GM23248 (cell line): ENCODE measurements at regions of chr16 and their contacts with region 1.

Region 1: DNA sequence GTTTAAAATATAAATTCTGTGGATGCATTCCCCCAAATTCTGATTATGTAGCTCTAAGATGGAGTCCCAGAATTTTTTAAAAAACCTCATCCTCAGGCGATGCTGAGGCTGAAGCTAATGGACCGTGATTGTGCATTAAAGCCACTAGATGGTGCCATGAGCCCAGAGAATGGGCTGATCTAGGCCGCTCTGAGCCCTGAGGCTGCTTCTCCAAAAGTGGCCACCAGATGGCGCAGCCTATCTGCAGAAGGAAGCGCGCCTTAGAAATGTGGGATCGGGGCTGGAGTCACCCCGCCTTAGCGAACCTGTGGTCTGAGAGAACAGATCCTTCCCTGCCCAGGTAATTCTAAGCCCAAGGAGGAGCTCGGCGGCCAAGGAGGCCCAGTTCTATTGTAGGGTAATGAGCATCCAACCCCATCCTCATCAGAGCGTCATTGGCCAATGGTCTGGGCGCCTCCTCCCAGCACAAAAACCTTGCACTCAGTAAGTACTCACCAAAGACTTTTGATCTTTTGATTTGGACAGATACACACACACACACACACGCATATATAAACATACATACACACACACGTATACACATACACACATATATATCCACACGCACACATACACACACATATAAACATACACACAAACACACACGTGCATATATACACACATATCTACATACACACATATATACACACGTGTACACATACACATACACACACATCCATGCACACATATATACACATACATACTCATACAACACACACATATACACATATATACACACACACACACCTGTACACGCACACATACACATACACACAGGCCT is 13.7 kb upstream of the MMP2 start:
- DNase-seq: peak; percentile 86
- H3K4me3 ChIP-seq: peak overlapping the region; percentile 46; the same call in 1 of the 2 replicates
- H3K27ac ChIP-seq: no peak overlapping the region
- H3K4me1 ChIP-seq: peaks cover 10% of the 10 kb centered on the region
- H3K27me3 ChIP-seq: no peaks in the 10 kb centered on the region

Region 2: GRCh38 chr16:55701442-55702319 is 236.4 kb after region 1 on chr16:
- in situ Hi-C with region 1: loop called (anchors 5 kb)
- DNase-seq: peak; percentile 72
- H3K4me3 ChIP-seq: no peak overlapping the region
- H3K27ac ChIP-seq: no peak overlapping the region
- H3K4me1 ChIP-seq: no peaks in the 10 kb centered on the region
- H3K27me3 ChIP-seq: peaks cover 27% of the 10 kb centered on the region